ENCODE measurements at regions of chr15 and their contacts with region 1.

Region 1: DNA sequence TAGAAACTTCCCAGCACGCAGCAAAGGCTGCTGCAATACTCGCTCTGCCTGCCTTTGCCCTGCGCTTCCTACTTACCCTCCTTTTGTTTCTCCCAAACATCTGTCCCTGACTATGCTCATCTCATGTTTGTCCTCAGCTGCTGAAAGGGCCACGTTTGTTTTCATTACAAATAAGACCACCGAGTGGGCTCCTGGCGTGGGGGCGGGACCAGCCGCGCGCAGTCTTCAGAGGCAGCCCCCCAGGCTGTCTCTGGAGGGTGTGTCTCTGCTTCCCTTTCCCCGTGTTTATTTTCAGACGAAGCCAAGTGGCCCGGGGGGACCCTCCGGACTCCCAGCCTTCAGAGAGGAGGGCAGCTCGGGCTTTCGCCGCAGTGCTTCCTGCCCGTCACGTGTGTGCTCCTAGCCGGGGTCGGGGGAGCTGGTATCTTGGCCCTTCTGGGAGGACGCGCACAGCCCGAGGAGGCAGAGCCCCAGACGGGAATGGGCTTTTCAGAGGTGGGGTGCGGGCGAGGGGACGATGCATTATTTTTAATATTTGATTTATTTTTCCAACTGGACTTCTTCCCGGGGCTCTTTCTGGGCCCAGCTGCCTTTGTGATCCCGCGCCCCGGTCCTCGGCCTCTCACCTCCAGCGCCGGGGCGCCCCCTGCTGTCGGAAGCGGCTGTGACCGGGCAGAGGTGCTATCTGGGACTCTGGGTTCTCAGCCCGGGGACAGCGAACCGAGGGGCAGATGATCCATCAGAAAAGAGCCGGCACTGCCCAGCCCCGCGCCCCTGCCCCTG is 70.0 kb upstream of the CGNL1 start:
- DNase-seq: peak; percentile 87
- ATAC-seq: peak; percentile 73
- H3K4me3 ChIP-seq: peak overlapping the region; percentile 48 to 97 (median 66)
- H3K4me3 Mint-ChIP-seq: peak overlapping the region; percentile 85
- H3K27ac ChIP-seq: peak overlapping the region; percentile 57 to 87
- H3K27ac Mint-ChIP-seq: peak overlapping the region; percentile 87
- H3K4me1 ChIP-seq: peaks cover 36 to 44% of the 10 kb centered on the region in 2 donors
- H3K4me1 Mint-ChIP-seq: peaks cover 57% of the 10 kb centered on the region
- H3K27me3 ChIP-seq: no peaks in the 10 kb centered on the region
- H3K27me3 Mint-ChIP-seq: no peaks in the 10 kb centered on the region
- CTCF ChIP-seq: peak; percentile 95

Region 2: GRCh38 chr15:56608140-56608778 is 698.1 kb before region 1 on chr15:
- CTCF ChIA-PET with region 1: no interaction called
- POLR2A ChIA-PET with region 1: no interaction called
- intact Hi-C with region 1: loop called (anchors 10 kb)
- DNase-seq: peak; percentile 57
- ATAC-seq: peak; percentile 72
- H3K4me3 ChIP-seq: peak overlapping the region in 1 of 5 experiments; percentile 26
- H3K4me3 Mint-ChIP-seq: peak overlapping the region; percentile 23
- H3K27ac ChIP-seq: peak overlapping the region in 1 of 2 donors; percentile 55
- H3K27ac Mint-ChIP-seq: peak overlapping the region; percentile 5
- H3K4me1 ChIP-seq: peaks cover 20 to 33% of the 10 kb centered on the region in 2 donors
- H3K4me1 Mint-ChIP-seq: peaks cover 36% of the 10 kb centered on the region
- H3K27me3 ChIP-seq: no peaks in the 10 kb centered on the region
- H3K27me3 Mint-ChIP-seq: no peaks in the 10 kb centered on the region
- CTCF ChIP-seq: no peak

Region 3: GRCh38 chr15:56918046-56918938 is 388.1 kb before region 1 on chr15 and contains the start of gene TCF12:
- CTCF ChIA-PET with region 1: interaction called, 8 read pairs
- POLR2A ChIA-PET with region 1: interaction called, 4 read pairs
- intact Hi-C with region 1: loop called (anchors 2 kb)
- DNase-seq: peak; percentile 97
- ATAC-seq: peak; percentile 74
- H3K4me3 ChIP-seq: peak within 1 kb of the TSS; percentile 80 to 92 (median 89)
- H3K4me3 Mint-ChIP-seq: peak within 1 kb of the TSS; percentile 93
- H3K27ac ChIP-seq: peak within 1 kb of the TSS; percentile 79 to 86
- H3K27ac Mint-ChIP-seq: peak within 1 kb of the TSS; percentile 92
- H3K4me1 ChIP-seq: peaks cover 19 to 21% of the 10 kb centered on the region in 2 donors
- H3K4me1 Mint-ChIP-seq: peaks cover 32% of the 10 kb centered on the region
- H3K27me3 ChIP-seq: no peaks in the 10 kb centered on the region
- H3K27me3 Mint-ChIP-seq: no peaks in the 10 kb centered on the region
- CTCF ChIP-seq: peak; percentile 59
- total RNA-seq, gene TCF12: 131 TPM in 2 replicates

Region 4: GRCh38 chr15:57213862-57214261 is 92.5 kb before region 1 on chr15:
- CTCF ChIA-PET with region 1: interaction called, 26 read pairs
- POLR2A ChIA-PET with region 1: interaction called, 9 read pairs
- intact Hi-C with region 1: loop called (anchors 2 kb)
- DNase-seq: peak; percentile 57
- ATAC-seq: peak; percentile 39
- H3K4me3 ChIP-seq: no peak overlapping the region
- H3K4me3 Mint-ChIP-seq: no peak overlapping the region
- H3K27ac ChIP-seq: no peak overlapping the region
- H3K27ac Mint-ChIP-seq: peak overlapping the region; percentile 0
- H3K4me1 ChIP-seq: peaks cover 7 to 18% of the 10 kb centered on the region in 2 donors
- H3K4me1 Mint-ChIP-seq: peaks cover 31% of the 10 kb centered on the region
- H3K27me3 ChIP-seq: no peaks in the 10 kb centered on the region
- H3K27me3 Mint-ChIP-seq: no peaks in the 10 kb centered on the region
- CTCF ChIP-seq: peak; percentile 54

Region 5: GRCh38 chr15:57231559-57231958 is 74.8 kb before region 1 on chr15:
- CTCF ChIA-PET with region 1: no interaction called
- POLR2A ChIA-PET with region 1: no interaction called
- intact Hi-C with region 1: no loop called
- DNase-seq: no peak
- ATAC-seq: no peak
- H3K4me3 ChIP-seq: no peak overlapping the region
- H3K4me3 Mint-ChIP-seq: no peak overlapping the region
- H3K27ac ChIP-seq: no peak overlapping the region
- H3K27ac Mint-ChIP-seq: no peak overlapping the region
- H3K4me1 ChIP-seq: no peaks in the 10 kb centered on the region
- H3K4me1 Mint-ChIP-seq: peaks cover 7% of the 10 kb centered on the region
- H3K27me3 ChIP-seq: no peaks in the 10 kb centered on the region
- H3K27me3 Mint-ChIP-seq: no peaks in the 10 kb centered on the region
- CTCF ChIP-seq: no peak

Region 6: GRCh38 chr15:57259568-57260040 is 46.7 kb before region 1 on chr15:
- CTCF ChIA-PET with region 1: interaction called, 27 read pairs
- POLR2A ChIA-PET with region 1: no interaction called
- intact Hi-C with region 1: no loop called
- DNase-seq: peak; percentile 64
- ATAC-seq: peak; percentile 97
- H3K4me3 ChIP-seq: peak overlapping the region in 1 of 5 experiments; percentile 27
- H3K4me3 Mint-ChIP-seq: peak overlapping the region; percentile 62
- H3K27ac ChIP-seq: peak overlapping the region; percentile 32 to 71
- H3K27ac Mint-ChIP-seq: peak overlapping the region; percentile 60
- H3K4me1 ChIP-seq: peaks cover 7 to 15% of the 10 kb centered on the region in 2 donors
- H3K4me1 Mint-ChIP-seq: peaks cover 17% of the 10 kb centered on the region
- H3K27me3 ChIP-seq: no peaks in the 10 kb centered on the region
- H3K27me3 Mint-ChIP-seq: no peaks in the 10 kb centered on the region
- CTCF ChIP-seq: no peak

Region 7: DNA sequence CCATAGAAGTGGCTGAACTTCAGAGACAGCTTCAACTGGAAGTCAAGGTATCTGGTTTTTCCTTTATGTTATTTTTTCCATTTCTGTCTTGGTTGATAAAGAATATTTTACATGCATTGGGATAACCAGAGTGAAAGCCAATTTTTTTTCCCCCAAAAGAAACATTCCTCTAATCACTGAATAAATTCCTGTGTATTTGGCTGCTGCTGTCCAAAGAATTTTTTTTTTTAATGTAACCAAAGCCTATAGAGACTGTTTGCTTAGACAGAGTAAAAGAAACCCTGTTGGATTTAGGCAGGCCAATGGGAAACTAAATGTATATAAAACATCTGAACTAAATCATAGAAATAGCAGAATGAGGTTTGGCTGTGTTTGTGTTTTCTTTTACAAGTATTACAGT is 145.2 kb after region 1 on chr15:
- CTCF ChIA-PET with region 1: no interaction called
- POLR2A ChIA-PET with region 1: no interaction called
- intact Hi-C with region 1: no loop called
- DNase-seq: no peak
- ATAC-seq: no peak
- H3K4me3 ChIP-seq: no peak overlapping the region
- H3K4me3 Mint-ChIP-seq: no peak overlapping the region
- H3K27ac ChIP-seq: no peak overlapping the region
- H3K27ac Mint-ChIP-seq: no peak overlapping the region
- H3K4me1 ChIP-seq: no peaks in the 10 kb centered on the region
- H3K4me1 Mint-ChIP-seq: no peaks in the 10 kb centered on the region
- H3K27me3 ChIP-seq: no peaks in the 10 kb centered on the region
- H3K27me3 Mint-ChIP-seq: peaks cover 5% of the 10 kb centered on the region
- CTCF ChIP-seq: no peak